B cell (primary cell): ENCODE measurements at regions of chr1 and their contacts with region 1.

Region 1: DNA sequence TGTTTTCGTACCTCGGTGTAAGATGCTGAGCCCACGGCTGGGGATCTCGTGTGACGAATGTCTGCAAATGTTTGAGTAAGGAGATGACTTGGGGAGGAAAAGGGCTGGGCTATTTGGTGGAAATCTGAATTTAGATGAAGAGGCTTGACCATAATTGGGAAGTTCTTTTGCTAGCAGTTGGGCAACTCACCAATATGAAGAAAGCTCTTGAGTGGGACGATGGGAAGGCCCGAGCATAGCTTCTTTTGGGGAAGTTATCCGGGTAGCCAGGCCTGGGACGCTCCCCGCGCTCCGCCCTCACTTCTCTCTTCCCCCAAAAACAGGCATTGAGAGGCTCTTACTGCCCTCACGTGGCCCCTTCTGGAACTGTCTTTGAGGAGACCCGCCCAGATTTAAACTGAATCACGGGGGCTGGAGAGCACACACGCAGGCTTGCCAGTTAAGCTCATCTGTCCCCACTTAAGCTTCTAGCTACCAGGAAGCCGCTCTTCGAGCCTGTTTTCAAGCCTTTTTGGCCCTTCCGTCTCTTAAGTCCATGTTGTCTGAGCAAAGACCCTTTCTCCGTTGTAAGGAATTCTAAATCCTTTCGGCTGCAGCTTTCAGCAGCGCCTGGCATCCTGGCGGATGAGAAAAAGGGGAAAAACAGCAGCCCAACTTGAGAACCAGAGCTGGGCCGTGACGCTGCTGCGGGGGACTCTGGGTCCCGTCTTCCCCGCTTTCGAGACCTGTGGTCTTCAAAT is 93.1 kb downstream of the NID1 start:
- DNase-seq: peak; percentile 94
- ATAC-seq: peak; percentile 99
- H3K4me3 ChIP-seq: peak overlapping the region; percentile 28 to 66 (median 55)
- H3K4me3 Mint-ChIP-seq: peak overlapping the region; percentile 79
- H3K27ac ChIP-seq: peak overlapping the region; percentile 72 to 86
- H3K27ac Mint-ChIP-seq: peak overlapping the region; percentile 95
- H3K4me1 ChIP-seq: peaks cover 17% of the 10 kb centered on the region in 2 donors
- H3K4me1 Mint-ChIP-seq: peaks cover 24% of the 10 kb centered on the region
- H3K27me3 ChIP-seq: no peaks in the 10 kb centered on the region
- H3K27me3 Mint-ChIP-seq: no peaks in the 10 kb centered on the region
- CTCF ChIP-seq: peak; percentile 85

Region 2: DNA sequence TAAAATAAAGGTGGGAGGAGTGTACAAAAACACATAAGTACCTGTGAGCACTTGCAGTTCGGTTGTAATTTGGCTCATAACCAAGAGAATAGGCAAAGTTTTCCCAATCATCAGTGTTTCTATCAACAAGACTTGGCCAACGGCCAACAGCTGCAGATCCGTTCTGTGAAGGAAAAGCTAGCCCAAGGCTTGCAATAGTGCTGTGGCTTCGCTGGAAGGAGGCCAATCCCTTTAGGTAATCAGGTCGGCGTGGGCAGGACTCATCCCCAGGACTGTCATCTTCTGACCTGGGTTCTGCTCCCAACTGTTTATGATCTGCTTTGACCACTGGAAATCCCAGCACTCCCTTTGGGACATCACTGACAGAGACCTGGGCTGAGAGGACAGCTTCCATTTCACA is 212.8 kb before region 1 on chr1:
- CTCF ChIA-PET with region 1: interaction called, 14 read pairs
- POLR2A ChIA-PET with region 1: no interaction called
- intact Hi-C with region 1: no loop called
- DNase-seq: no peak
- ATAC-seq: no peak
- H3K4me3 ChIP-seq: no peak overlapping the region
- H3K4me3 Mint-ChIP-seq: no peak overlapping the region
- H3K27ac ChIP-seq: no peak overlapping the region
- H3K27ac Mint-ChIP-seq: no peak overlapping the region
- H3K4me1 ChIP-seq: peaks cover 0 to 1% of the 10 kb centered on the region in 2 donors
- H3K4me1 Mint-ChIP-seq: no peaks in the 10 kb centered on the region
- H3K27me3 ChIP-seq: no peaks in the 10 kb centered on the region
- H3K27me3 Mint-ChIP-seq: no peaks in the 10 kb centered on the region
- CTCF ChIP-seq: no peak

Region 3: DNA sequence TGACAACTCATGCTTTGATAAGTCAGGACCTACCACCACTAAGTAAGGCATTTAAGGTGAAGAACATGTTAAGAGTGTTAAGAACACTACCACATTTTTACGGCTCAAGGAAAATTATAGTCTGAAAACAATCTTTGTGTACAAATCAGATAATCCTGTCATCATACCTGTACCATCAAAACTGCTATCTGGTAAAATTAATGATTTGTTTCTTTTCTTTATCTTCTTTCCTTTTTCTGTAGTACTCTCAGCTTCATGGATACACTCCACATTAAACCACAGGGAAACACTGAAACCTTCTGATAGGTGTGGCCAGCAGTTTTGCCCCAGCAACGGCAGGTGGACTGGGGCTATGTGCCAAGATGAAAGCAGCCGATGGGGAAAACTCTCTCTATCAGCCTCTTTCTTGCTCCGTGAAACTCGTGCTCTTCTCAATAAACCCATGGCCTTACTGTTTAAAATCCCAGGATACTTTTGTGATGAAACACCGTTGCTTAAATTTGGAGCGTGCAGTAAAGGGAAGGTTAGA is 180.1 kb before region 1 on chr1:
- CTCF ChIA-PET with region 1: interaction called, 15 read pairs
- POLR2A ChIA-PET with region 1: no interaction called
- intact Hi-C with region 1: no loop called
- DNase-seq: no peak
- ATAC-seq: no peak
- H3K4me3 ChIP-seq: no peak overlapping the region
- H3K4me3 Mint-ChIP-seq: no peak overlapping the region
- H3K27ac ChIP-seq: peak overlapping the region in 1 of 2 donors; percentile 16
- H3K27ac Mint-ChIP-seq: no peak overlapping the region
- H3K4me1 ChIP-seq: peaks cover 7 to 9% of the 10 kb centered on the region in 2 donors
- H3K4me1 Mint-ChIP-seq: peaks cover 13% of the 10 kb centered on the region
- H3K27me3 ChIP-seq: no peaks in the 10 kb centered on the region
- H3K27me3 Mint-ChIP-seq: no peaks in the 10 kb centered on the region
- CTCF ChIP-seq: no peak

Region 4: DNA sequence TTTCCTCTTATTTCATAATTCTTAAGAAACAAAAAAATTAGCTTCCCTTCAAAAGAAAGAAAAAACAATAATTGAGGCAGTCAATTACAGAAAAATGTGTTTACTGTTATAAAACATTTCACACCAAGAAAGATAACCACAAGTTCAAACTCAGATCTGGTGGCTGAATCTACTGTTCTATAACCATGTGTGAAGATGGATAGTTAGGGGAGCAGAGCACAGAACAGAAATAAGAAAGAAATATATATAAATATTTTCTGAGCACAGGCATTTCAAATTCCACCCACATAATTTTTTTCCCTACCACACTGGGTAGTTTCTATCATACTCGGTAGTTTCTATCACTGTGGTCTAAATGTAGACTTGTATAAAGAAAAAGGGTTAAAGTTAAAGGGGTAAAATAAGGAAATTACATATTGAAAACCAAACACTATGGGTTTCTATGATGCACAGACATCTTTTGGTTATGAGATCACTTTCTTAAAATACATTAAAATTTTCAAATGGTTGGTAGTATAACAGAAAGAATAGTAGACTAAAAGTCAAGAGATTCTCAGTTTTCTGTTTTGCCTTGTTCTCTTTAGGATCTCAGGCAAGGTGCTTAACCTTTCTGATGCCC is 115.8 kb before region 1 on chr1:
- CTCF ChIA-PET with region 1: interaction called, 10 read pairs
- POLR2A ChIA-PET with region 1: no interaction called
- intact Hi-C with region 1: no loop called
- DNase-seq: no peak
- ATAC-seq: peak; percentile 31
- H3K4me3 ChIP-seq: no peak overlapping the region
- H3K4me3 Mint-ChIP-seq: peak overlapping the region; percentile 6
- H3K27ac ChIP-seq: peak overlapping the region in 1 of 2 donors; percentile 26
- H3K27ac Mint-ChIP-seq: no peak overlapping the region
- H3K4me1 ChIP-seq: peaks cover 0 to 56% of the 10 kb centered on the region in 2 donors
- H3K4me1 Mint-ChIP-seq: peaks cover 46% of the 10 kb centered on the region
- H3K27me3 ChIP-seq: no peaks in the 10 kb centered on the region
- H3K27me3 Mint-ChIP-seq: no peaks in the 10 kb centered on the region
- CTCF ChIP-seq: no peak

Region 5: DNA sequence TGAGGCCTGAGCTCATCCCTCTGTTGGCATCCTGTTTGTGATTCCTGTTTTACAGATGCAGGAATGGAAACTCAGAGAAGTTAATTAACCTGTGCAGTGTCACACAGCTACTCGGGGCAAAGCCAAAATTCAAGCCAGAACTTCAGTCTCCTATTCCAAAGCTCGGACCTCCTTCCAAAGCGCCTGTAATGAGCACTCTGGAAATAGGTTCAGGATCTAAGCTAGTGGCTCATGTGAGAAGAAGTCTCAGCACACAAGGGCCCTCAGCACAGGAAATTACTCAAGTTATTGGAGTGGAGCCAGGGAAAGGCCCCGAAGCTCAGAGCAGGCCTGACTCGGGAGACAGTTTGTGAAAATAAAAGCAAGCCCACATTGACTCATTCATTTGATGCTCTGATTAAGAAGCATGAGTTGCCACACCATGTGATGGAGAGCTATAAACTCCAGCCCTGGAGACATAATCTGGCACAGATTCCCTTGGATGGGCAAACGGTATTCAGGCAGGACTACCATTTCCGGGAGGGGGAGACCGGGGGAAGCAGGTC is 54.4 kb before region 1 on chr1:
- CTCF ChIA-PET with region 1: interaction called, 10 read pairs
- POLR2A ChIA-PET with region 1: no interaction called
- intact Hi-C with region 1: no loop called
- DNase-seq: peak; percentile 53
- ATAC-seq: peak; percentile 49
- H3K4me3 ChIP-seq: no peak overlapping the region
- H3K4me3 Mint-ChIP-seq: peak overlapping the region; percentile 46
- H3K27ac ChIP-seq: no peak overlapping the region
- H3K27ac Mint-ChIP-seq: peak overlapping the region; percentile 10
- H3K4me1 ChIP-seq: peaks cover 8 to 21% of the 10 kb centered on the region in 2 donors
- H3K4me1 Mint-ChIP-seq: peaks cover 34% of the 10 kb centered on the region
- H3K27me3 ChIP-seq: no peaks in the 10 kb centered on the region
- H3K27me3 Mint-ChIP-seq: no peaks in the 10 kb centered on the region
- CTCF ChIP-seq: no peak

Region 6: GRCh38 chr1:235938709-235939479 is 32.8 kb before region 1 on chr1:
- CTCF ChIA-PET with region 1: interaction called, 14 read pairs
- POLR2A ChIA-PET with region 1: interaction called, 8 read pairs
- intact Hi-C with region 1: loop called (anchors 2 kb)
- DNase-seq: peak; percentile 75
- ATAC-seq: peak; percentile 84
- H3K4me3 ChIP-seq: peak overlapping the region in 4 of 5 experiments; percentile 8 to 42 (median 17)
- H3K4me3 Mint-ChIP-seq: peak overlapping the region; percentile 72
- H3K27ac ChIP-seq: peak overlapping the region; percentile 79 to 89
- H3K27ac Mint-ChIP-seq: peak overlapping the region; percentile 87
- H3K4me1 ChIP-seq: peaks cover 85 to 89% of the 10 kb centered on the region in 2 donors
- H3K4me1 Mint-ChIP-seq: peaks cover 80% of the 10 kb centered on the region
- H3K27me3 ChIP-seq: no peaks in the 10 kb centered on the region
- H3K27me3 Mint-ChIP-seq: no peaks in the 10 kb centered on the region
- CTCF ChIP-seq: no peak

Region 7: GRCh38 chr1:235960809-235961208 is 10.9 kb before region 1 on chr1:
- CTCF ChIA-PET with region 1: interaction called, 112 read pairs
- POLR2A ChIA-PET with region 1: no interaction called
- intact Hi-C with region 1: no loop called
- DNase-seq: no peak
- ATAC-seq: no peak
- H3K4me3 ChIP-seq: no peak overlapping the region
- H3K4me3 Mint-ChIP-seq: no peak overlapping the region
- H3K27ac ChIP-seq: no peak overlapping the region
- H3K27ac Mint-ChIP-seq: no peak overlapping the region
- H3K4me1 ChIP-seq: no peaks in the 10 kb centered on the region
- H3K4me1 Mint-ChIP-seq: peaks cover 34% of the 10 kb centered on the region
- H3K27me3 ChIP-seq: no peaks in the 10 kb centered on the region
- H3K27me3 Mint-ChIP-seq: no peaks in the 10 kb centered on the region
- CTCF ChIP-seq: no peak